Left colon (tissue), 2 donors: ENCODE measurements at regions of chr1 and their contacts with region 1.

Region 1: DNA sequence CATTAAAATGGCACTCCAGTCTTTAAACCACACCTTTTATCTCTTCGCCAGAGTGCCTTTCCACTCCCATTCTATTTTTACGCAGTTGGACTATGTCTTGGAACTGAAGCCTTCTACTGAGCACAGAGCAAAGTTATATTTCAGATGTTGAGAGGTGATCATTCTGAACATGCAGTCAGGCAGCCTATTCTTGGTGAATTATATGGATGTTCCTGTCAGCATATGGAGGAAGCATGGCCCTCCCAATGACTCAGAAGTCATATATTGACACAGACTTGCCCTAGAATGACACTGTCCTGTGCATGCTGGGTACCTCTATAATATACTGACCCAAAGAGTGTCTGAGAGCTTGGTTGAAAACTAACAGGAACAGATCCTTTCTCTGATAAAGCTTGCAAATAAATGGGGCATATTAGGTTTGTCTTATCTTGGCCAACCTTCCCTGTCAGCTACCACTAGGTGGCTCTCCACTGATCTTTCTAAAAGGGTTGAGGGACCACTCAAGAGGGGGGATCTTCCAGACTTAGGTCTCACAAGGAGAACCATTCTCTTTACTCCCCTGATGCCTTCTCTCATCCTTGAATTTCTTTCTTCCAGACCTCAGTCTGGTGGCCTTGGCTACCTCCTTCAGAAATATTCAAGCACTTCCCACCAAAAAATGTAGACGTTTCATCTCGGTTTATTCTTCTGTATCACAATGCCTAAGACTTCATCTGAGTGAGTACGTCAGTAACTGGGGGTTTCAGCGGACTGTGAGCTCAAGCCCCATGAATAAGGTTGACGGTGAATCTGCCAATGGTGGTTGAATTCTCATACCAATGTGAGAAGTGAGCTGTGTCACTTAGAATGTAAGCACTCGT is 11.8 kb upstream of the ALG14 start:
- DNase-seq: no peak
- ATAC-seq: peak; percentile 97

Region 2: DNA sequence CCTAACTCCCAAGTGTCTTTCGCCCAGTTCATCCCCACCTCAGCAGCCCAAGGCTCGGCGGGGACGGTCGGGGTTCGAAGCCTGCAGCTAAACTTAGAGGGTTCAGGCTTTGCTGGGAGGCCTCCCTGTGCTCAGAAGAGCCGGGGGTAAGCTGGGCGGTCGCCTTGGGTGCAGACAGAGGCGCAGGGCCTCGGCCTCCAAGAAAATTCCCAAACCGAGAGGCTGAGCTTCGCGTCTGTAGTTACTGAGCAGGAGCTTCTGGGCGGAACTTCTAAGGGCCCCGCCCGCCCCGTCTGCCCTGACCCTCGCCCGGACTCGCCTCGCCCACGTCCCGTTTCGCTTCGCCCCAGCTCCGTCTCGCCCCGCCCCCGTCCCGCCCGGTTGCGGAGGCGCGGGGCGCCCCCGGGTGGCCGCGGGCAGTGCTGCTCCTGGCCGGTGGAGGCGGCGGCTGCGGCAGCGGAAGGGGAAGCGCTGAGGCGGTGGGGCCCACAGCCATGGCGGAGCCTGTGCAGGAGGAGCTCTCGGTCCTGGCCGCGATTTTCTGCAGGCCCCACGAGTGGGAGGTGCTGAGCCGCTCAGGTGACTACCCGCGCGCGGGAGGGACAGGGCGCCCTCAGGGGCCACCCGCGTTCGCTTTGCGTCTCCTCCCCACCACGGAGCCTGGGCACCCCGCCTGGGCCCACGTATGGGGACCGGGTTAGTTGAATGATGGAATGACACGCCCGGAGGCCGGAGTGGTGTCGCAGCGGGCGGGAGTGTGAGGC is 149.4 kb after region 1 on chr1 and contains the start of gene RWDD3:
- intact Hi-C with region 1: loop called in 1 of 2 experiments (anchors 10 kb)
- DNase-seq: peak; percentile 94 to 97
- ATAC-seq: peak; percentile 92
- total RNA-seq, gene RWDD3: 13.3 to 23.1 TPM

Region 3: GRCh38 chr1:95247607-95248006 is 163.1 kb after region 1 on chr1:
- intact Hi-C with region 1: no loop called
- DNase-seq: no peak
- ATAC-seq: no peak